Activated CD4-positive, alpha-beta memory T cell treated with anti-CD3 and anti-CD28 coated beads, Interleukin-2, amount 10 ng/mL, durations not matched to agents 7 days and 5 days (primary cell): ENCODE measurements at regions of chr15 and their contacts with region 1.

Region 1: DNA sequence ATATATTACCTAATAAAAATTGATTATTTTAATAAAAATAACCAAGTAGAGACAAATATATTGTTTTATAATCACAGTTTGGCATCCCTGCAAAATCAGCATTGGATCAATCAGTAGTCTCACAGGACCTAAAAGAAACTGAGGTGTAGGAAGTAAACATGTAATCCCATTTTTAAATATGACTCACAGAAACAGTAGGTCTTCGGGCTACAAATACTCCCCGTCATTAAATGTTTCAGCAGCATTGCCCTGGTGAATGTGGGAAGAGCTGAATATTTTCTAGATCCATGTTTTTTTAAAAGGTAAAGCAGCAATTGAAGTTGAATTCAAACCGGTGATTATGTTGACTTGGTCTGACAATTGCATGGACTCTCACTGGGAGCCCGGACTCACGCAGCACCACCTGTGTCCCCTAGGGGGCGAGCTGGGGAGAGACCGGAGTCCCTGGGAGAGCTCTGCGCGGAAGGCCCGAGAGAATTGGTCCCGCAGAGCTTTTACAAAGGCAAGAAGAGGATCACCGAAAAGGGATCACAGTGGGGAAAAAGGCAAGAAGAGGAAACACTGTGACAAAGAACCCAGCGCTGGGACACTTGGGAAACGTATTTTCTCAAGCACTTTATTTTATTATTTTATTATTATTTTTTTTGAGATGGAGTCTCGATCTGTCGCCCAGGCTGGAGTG is 17.2 kb upstream of the USP3 start:
- DNase-seq: peak; percentile 90
- H3K4me3 Mint-ChIP-seq: peak overlapping the region; percentile 12
- H3K27ac Mint-ChIP-seq: peak overlapping the region; percentile 10
- H3K4me1 Mint-ChIP-seq: peaks cover 57% of the 10 kb centered on the region
- H3K27me3 Mint-ChIP-seq: peaks cover 2% of the 10 kb centered on the region

Region 2: GRCh38 chr15:63497642-63498467 is 10.6 kb after region 1 on chr15:
- CTCF ChIA-PET with region 1: interaction called, 46 read pairs
- POLR2A ChIA-PET with region 1: interaction called, 175 read pairs
- DNase-seq: peak; percentile 71
- H3K4me3 Mint-ChIP-seq: no peak overlapping the region
- H3K27ac Mint-ChIP-seq: no peak overlapping the region
- H3K4me1 Mint-ChIP-seq: peaks cover 74% of the 10 kb centered on the region
- H3K27me3 Mint-ChIP-seq: no peaks in the 10 kb centered on the region